ENCODE measurements at regions of chr4 and their contacts with region 1.

Region 1: GRCh38 chr4:98467627-98468072 is 190.8 kb downstream of the TSPAN5 start:
- DNase-seq: peak; percentile 95
- ATAC-seq: peak; percentile 88
- H3K4me3 ChIP-seq: peak overlapping the region; percentile 37; the same call in 1 of the 2 replicates
- H3K27ac ChIP-seq: 0 out of 2 replicates have a peak overlapping the region, but pooled peaks have one; percentile 4
- H3K4me1 ChIP-seq: peaks cover 5% of the 10 kb centered on the region
- H3K27me3 ChIP-seq: no peaks in the 10 kb centered on the region
- CTCF ChIP-seq: peak; percentile 82
- POLR2A ChIP-seq: peak; percentile 60; the same call in 1 of the 2 replicates
- RAD21 ChIP-seq: peak; percentile 90

Region 2: GRCh38 chr4:97605932-97606331 is 861.7 kb before region 1 on chr4:
- CTCF ChIA-PET with region 1: no interaction called
- POLR2A ChIA-PET with region 1: no interaction called
- dilution Hi-C with region 1: no loop called
- in situ Hi-C with region 1: no loop called
- intact Hi-C with region 1: no loop called
- DNase-seq: no peak
- ATAC-seq: no peak
- H3K4me3 ChIP-seq: no peak overlapping the region
- H3K27ac ChIP-seq: no peak overlapping the region
- H3K4me1 ChIP-seq: no peaks in the 10 kb centered on the region
- H3K27me3 ChIP-seq: no peaks in the 10 kb centered on the region
- CTCF ChIP-seq: no peak
- POLR2A ChIP-seq: no peak
- RAD21 ChIP-seq: no peak

Region 3: DNA sequence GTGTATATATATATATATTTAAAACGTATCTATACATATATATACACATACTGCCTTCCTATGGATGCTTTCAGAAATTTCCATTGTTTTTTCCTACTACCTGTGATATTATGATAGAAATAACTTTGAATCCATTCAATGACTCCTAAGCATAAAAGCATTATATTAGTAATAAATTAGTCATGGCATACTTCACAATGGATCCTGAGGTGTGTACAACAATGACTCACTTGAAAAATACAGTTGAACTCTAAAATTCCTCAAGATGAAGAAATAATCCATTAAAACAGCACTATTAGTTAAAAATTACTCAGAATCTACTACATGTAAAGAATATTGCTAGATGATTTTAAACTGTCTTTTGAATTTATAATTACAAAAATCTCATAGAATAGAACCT is 525.5 kb before region 1 on chr4:
- CTCF ChIA-PET with region 1: no interaction called
- POLR2A ChIA-PET with region 1: no interaction called
- dilution Hi-C with region 1: no loop called
- in situ Hi-C with region 1: no loop called
- intact Hi-C with region 1: no loop called
- DNase-seq: no peak
- ATAC-seq: no peak
- H3K4me3 ChIP-seq: no peak overlapping the region
- H3K27ac ChIP-seq: no peak overlapping the region
- H3K4me1 ChIP-seq: no peaks in the 10 kb centered on the region
- H3K27me3 ChIP-seq: no peaks in the 10 kb centered on the region
- CTCF ChIP-seq: no peak
- POLR2A ChIP-seq: no peak
- RAD21 ChIP-seq: no peak

Region 4: GRCh38 chr4:98125585-98125984 is 342.1 kb before region 1 on chr4:
- CTCF ChIA-PET with region 1: no interaction called
- POLR2A ChIA-PET with region 1: no interaction called
- dilution Hi-C with region 1: no loop called
- in situ Hi-C with region 1: no loop called
- intact Hi-C with region 1: no loop called
- DNase-seq: no peak
- ATAC-seq: no peak
- H3K4me3 ChIP-seq: no peak overlapping the region
- H3K27ac ChIP-seq: no peak overlapping the region
- H3K4me1 ChIP-seq: no peaks in the 10 kb centered on the region
- H3K27me3 ChIP-seq: no peaks in the 10 kb centered on the region; the same call in 1 of the 2 replicates
- CTCF ChIP-seq: no peak
- POLR2A ChIP-seq: no peak
- RAD21 ChIP-seq: no peak

Region 5: GRCh38 chr4:98260579-98261290 is 206.9 kb before region 1 on chr4:
- CTCF ChIA-PET with region 1: interaction called, 4 read pairs
- POLR2A ChIA-PET with region 1: interaction called, 3 read pairs
- dilution Hi-C with region 1: no loop called
- in situ Hi-C with region 1: no loop called
- intact Hi-C with region 1: loop called (anchors 5 kb)
- DNase-seq: peak; percentile 96
- ATAC-seq: peak; percentile 95
- H3K4me3 ChIP-seq: peak overlapping the region; percentile 51
- H3K27ac ChIP-seq: peak overlapping the region; percentile 82
- H3K4me1 ChIP-seq: peaks cover 4% of the 10 kb centered on the region
- H3K27me3 ChIP-seq: no peaks in the 10 kb centered on the region
- CTCF ChIP-seq: no peak
- POLR2A ChIP-seq: peak; percentile 91
- RAD21 ChIP-seq: no peak

Region 6: GRCh38 chr4:98851806-98852205 is 384.2 kb after region 1 on chr4:
- CTCF ChIA-PET with region 1: no interaction called
- POLR2A ChIA-PET with region 1: no interaction called
- dilution Hi-C with region 1: no loop called
- in situ Hi-C with region 1: no loop called
- intact Hi-C with region 1: loop called (anchors 10 kb)
- DNase-seq: peak; percentile 64
- ATAC-seq: peak; percentile 85
- H3K4me3 ChIP-seq: no peak overlapping the region
- H3K27ac ChIP-seq: no peak overlapping the region
- H3K4me1 ChIP-seq: peaks cover 4% of the 10 kb centered on the region; the same call in 1 of the 2 replicates
- H3K27me3 ChIP-seq: no peaks in the 10 kb centered on the region
- CTCF ChIP-seq: no peak
- POLR2A ChIP-seq: no peak
- RAD21 ChIP-seq: no peak

Region 7: DNA sequence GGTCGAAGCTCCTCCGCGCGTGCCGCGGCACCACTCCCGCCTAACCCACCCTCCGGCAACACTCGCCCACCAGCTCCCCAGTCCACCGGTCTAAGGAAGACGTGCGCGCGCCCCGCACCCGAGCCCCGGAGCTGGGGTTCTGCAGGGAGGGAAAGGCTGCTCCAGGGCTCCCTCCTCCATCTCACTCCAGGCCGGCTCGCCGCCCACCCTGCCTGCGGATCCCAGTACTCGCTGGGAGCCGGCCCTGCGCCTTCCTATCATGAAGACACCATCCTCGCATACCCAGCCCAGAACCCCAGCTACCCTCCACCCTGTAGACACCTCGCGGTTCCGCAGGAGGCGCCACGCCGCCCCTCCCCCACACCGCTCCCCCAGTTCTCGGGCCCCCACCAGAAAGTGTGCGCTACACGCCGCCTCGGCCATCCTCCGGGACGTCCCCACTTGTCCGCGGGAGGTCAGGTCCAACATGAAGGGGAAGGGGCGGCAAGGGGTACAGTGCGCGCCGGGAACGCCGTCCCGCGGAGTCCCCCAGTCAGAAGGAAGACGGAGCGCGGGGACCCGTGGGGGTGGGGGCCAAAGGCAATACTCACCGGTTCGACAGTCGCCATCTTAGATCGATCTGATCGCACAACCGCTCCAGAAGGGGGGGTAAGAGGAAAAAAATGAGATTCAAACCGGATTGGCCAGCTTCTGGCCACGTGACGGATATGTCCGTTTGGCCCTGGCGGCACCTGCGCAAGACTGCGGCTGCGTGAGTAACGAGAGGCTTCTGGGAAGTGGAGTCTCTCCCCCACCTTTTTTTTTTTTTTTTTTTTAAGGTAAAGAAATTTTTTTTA is 461.1 kb after region 1 on chr4 and contains the start of gene EIF4E:
- CTCF ChIA-PET with region 1: interaction called, 4 read pairs
- POLR2A ChIA-PET with region 1: no interaction called
- dilution Hi-C with region 1: no loop called
- in situ Hi-C with region 1: no loop called
- intact Hi-C with region 1: loop called (anchors 1 kb)
- DNase-seq: peak; percentile 99
- ATAC-seq: peak; percentile 80
- H3K4me3 ChIP-seq: peak within 1 kb of the TSS; percentile 85
- H3K27ac ChIP-seq: peak within 1 kb of the TSS; percentile 94
- H3K4me1 ChIP-seq: peaks cover 3% of the 10 kb centered on the region; the same call in 1 of the 2 replicates
- H3K27me3 ChIP-seq: no peaks in the 10 kb centered on the region
- CTCF ChIP-seq: 0 out of 2 replicates have a peak, but pooled peaks have one; percentile 20
- POLR2A ChIP-seq: 0 out of 2 replicates have a peak, but pooled peaks have one; percentile 60
- RAD21 ChIP-seq: no peak
- total RNA-seq, gene EIF4E: 113 and 288 TPM in 2 replicates

Region 8: DNA sequence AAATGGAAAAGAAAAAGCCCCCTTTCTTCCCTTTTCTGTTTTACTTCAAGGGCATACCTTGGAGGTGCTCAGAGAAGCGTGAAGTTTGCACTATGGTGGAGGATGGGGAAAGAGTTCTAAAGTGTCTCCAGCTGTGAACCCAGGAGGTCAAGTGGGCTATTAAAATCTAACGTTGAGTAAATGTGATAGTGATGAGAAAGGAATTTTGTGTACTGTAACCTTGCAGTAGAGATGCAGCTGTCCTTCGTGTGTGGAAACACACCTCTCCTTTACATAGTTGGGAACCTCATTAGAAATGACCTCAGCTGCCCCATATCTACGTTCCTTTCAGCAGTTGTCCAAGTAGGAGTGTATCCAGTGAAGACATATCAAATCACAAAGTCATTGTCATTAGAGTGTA is 594.5 kb after region 1 on chr4:
- CTCF ChIA-PET with region 1: no interaction called
- POLR2A ChIA-PET with region 1: no interaction called
- dilution Hi-C with region 1: no loop called
- in situ Hi-C with region 1: loop called (anchors 25 kb)
- intact Hi-C with region 1: loop called (anchors 10 kb)
- DNase-seq: peak; percentile 27
- ATAC-seq: no peak
- H3K4me3 ChIP-seq: no peak overlapping the region
- H3K27ac ChIP-seq: no peak overlapping the region
- H3K4me1 ChIP-seq: peaks cover 9% of the 10 kb centered on the region
- H3K27me3 ChIP-seq: no peaks in the 10 kb centered on the region
- CTCF ChIP-seq: no peak
- POLR2A ChIP-seq: no peak
- RAD21 ChIP-seq: no peak

Measured in IMR-90 (cell line).